ENCODE measurements at regions of chr1 and their contacts with region 1.

Region 1: GRCh38 chr1:44835738-44836675 is 7.0 kb downstream of the PTCH2 start:
- DNase-seq: peak; percentile 85
- H3K4me3 ChIP-seq: no peak overlapping the region
- H3K27ac ChIP-seq: peak overlapping the region in 1 of 2 donors; percentile 26
- H3K4me1 ChIP-seq: no peaks in the 10 kb centered on the region
- H3K27me3 ChIP-seq: no peaks in the 10 kb centered on the region
- CTCF ChIP-seq: peak; percentile 76 to 80 (median 79)
- POLR2A ChIP-seq: no peak

Region 2: DNA sequence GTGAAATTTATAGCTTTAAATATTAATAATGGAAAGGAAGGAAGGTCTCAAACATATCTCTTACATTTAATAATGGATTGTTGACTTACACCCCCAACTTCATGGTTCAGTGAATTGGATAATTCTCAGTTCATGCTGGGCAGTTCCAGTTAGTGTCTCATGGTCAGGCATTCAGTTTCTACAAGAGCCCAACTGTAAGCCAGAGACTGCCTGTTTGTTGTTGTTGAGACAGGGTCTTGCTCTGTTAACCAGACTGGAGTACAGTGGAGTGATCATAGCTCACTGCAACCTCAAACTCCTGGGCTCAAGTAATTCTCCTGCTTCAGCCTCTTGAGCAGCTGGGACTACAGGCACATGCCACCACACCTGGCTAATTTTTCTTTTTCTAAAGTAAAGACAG is 627.8 kb before region 1 on chr1:
- intact Hi-C with region 1: no loop called
- DNase-seq: no peak
- H3K4me3 ChIP-seq: no peak overlapping the region
- H3K27ac ChIP-seq: no peak overlapping the region
- H3K4me1 ChIP-seq: no peaks in the 10 kb centered on the region
- H3K27me3 ChIP-seq: no peaks in the 10 kb centered on the region
- CTCF ChIP-seq: no peak
- POLR2A ChIP-seq: no peak

Region 3: DNA sequence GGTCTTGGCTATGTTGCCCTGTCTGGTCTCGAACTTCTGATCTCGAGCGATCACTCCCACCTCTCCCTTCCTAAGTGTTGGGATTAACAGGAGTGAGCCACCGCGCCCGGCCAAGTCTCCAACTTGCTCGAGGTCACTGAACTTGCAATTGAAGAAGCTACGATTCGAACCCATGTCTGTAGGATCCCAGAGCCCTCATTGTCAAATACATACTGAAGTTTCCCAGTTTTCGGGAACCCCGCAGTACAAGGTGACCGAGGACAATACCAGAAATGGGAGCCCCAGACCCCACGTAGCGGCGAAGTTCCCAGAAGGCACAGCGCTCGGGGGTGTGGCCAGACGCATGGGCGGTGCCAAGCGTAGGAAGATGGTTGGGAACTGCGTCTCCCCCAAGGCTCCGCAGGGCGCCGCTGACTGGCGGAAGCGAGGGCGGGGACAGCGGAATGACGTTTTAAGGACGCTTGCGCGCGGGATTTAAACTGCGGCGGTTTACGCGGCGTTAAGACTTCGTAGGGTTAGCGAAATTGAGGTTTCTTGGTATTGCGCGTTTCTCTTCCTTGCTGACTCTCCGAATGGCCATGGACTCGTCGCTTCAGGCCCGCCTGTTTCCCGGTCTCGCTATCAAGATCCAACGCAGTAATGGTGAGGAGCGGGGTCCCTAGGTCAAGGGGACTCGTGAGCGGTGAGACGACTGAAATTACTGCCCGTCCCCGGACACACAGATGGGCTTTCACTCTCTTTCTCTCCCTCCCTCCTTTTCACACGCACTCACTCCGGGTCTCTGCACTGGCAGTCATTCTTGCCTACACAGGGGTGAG is 96.4 kb before region 1 on chr1 and contains the start of gene KIF2C:
- intact Hi-C with region 1: no loop called
- DNase-seq: peak; percentile 96 to 97
- H3K4me3 ChIP-seq: peak within 1 kb of the TSS; percentile 34 to 41
- H3K27ac ChIP-seq: peak within 1 kb of the TSS; percentile 83 to 87
- H3K4me1 ChIP-seq: no peaks in the 10 kb centered on the region
- H3K27me3 ChIP-seq: no peaks in the 10 kb centered on the region
- CTCF ChIP-seq: peak in 3 of 4 experiments; percentile 10 to 36 (median 13)
- POLR2A ChIP-seq: peak; percentile 57 to 79
- total RNA-seq, gene KIF2C: 0.64 to 15.1 TPM in 2 of 4 donors, not detected in the others

Region 4: GRCh38 chr1:44786138-44786840 is 49.7 kb before region 1 on chr1:
- intact Hi-C with region 1: loop called (anchors 10 kb)
- DNase-seq: peak; percentile 64 to 78
- H3K4me3 ChIP-seq: peak overlapping the region; percentile 36 to 45
- H3K27ac ChIP-seq: peak overlapping the region; percentile 68 to 77
- H3K4me1 ChIP-seq: peaks cover 0 to 7% of the 10 kb centered on the region in 2 donors
- H3K27me3 ChIP-seq: no peaks in the 10 kb centered on the region
- CTCF ChIP-seq: peak; percentile 95 to 98 (median 97)
- POLR2A ChIP-seq: peak in 1 of 2 donors; percentile 33

Region 5: DNA sequence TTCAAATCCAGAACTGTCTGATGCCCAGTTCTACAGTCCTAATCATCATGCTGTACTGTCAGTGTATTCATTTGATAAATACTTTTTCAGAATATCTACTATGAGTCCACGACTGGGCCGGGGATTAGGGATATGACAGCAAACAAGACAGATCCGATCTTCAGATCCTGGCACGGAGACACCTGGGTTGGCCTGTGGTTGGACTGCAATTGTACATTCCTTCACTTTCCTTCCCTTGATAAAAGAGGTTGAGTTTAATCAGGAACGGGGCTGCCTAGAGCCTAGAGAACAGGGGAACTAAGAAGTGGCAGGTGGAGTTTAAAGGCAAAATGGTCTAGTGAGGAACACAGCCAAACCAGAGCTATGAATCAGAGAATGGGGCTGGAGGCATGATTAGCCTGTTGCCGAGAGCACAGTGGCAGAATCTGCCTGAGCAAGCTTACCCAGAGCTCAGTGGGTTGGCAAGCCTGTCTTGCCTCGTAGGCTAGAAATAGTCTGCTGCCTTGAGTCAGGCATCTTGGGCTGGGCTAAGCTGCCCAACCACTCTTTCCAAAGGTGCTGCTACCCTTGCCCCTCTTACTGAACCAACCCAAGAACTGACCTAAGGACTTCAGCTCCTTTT is 45.1 kb after region 1 on chr1:
- intact Hi-C with region 1: no loop called
- DNase-seq: no peak
- H3K4me3 ChIP-seq: no peak overlapping the region
- H3K27ac ChIP-seq: no peak overlapping the region
- H3K4me1 ChIP-seq: no peaks in the 10 kb centered on the region
- H3K27me3 ChIP-seq: no peaks in the 10 kb centered on the region
- CTCF ChIP-seq: no peak
- POLR2A ChIP-seq: no peak

Measured in uterus (tissue), 4 donors.